ENCODE measurements at regions of chr6 and their contacts with region 1.

Region 1: DNA sequence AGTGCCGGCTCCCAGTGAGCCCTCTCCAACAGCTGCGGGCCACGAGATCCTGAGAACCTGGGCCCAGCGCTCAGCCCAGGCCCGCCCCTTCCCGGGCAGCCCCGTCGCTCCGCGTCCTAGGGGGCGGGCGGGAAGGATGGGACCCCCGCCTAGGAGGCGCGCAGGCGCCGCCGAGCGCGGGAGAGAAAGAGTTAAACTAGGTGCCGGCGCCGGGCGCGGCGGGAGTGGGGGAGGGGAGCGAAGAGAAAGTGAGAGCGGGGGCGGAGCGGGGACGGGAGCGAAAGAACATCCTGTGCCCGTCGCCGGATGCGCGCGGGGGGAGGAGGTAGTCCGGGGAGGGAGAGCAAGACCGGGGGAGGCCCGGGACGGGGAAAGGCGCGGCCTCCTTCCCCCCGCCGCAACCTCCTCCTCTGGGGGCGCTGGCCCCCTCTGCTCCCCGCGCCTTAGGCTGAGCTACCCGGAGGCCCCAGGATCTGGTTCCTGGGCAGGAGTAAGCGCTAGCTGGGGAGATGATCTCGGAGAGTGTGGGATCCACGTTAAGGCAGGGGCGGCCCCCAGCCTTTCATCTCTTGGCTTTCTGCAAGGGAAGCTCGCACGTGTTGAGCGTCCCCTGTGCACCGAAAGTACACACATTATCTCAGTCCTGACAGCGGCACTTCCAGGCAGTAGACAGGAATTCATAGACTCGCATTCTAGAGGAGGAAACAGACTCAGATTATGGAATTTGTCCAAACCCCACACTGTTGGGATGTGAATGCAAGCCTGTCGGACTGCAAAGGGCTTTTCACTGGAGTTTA is 4.9 kb upstream of the ARMC12 start:
- DNase-seq: peak; percentile 86
- H3K4me3 ChIP-seq: peak overlapping the region; percentile 90
- H3K27ac ChIP-seq: peak overlapping the region; percentile 81
- H3K4me1 ChIP-seq: peaks cover 29% of the 10 kb centered on the region
- H3K27me3 ChIP-seq: no peaks in the 10 kb centered on the region
- CTCF ChIP-seq: 0 out of 2 replicates have a peak, but pooled peaks have one; percentile 14

Region 2: DNA sequence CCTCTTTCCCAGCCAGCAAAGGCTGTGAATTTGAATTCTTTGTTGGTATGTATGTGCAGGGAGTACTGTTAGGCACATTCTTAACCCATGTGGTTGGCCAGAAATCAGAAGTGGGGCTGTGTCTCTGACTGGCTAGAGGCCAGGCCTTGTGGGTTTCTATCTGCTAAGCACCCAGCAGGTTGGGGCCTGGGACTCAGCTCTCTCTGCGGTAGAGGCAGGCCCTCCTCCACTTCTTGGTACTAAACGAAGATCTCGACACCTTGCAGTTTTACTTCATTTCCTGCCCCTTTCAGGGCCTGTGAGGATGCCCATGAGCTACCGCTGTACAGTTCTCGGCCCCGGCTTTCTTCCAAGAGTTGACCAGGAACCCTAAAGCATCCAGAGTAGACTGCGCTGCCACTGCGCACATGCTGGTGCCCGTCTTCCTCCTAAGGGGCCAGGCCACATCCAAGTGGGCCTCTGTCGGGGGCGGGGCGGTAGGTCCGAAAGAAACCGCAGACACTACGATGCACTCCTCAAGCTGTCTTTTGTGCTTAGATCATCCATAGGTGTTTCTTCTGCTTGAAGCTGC is 641.9 kb before region 1 on chr6:
- CTCF ChIA-PET with region 1: no interaction called
- POLR2A ChIA-PET with region 1: no interaction called
- intact Hi-C with region 1: no loop called
- DNase-seq: no peak
- H3K4me3 ChIP-seq: no peak overlapping the region
- H3K27ac ChIP-seq: no peak overlapping the region
- H3K4me1 ChIP-seq: no peaks in the 10 kb centered on the region
- H3K27me3 ChIP-seq: no peaks in the 10 kb centered on the region
- CTCF ChIP-seq: no peak

Region 3: GRCh38 chr6:35688581-35689322 is 43.2 kb before region 1 on chr6 and contains the start of gene FKBP5:
- CTCF ChIA-PET with region 1: interaction called, 7 read pairs
- POLR2A ChIA-PET with region 1: no interaction called
- intact Hi-C with region 1: loop called (anchors 2 kb)
- DNase-seq: peak; percentile 93
- H3K4me3 ChIP-seq: peak within 1 kb of the TSS; percentile 67
- H3K27ac ChIP-seq: no peak within 1 kb of the TSS
- H3K4me1 ChIP-seq: peaks cover 9% of the 10 kb centered on the region
- H3K27me3 ChIP-seq: no peaks in the 10 kb centered on the region
- CTCF ChIP-seq: no peak
- total RNA-seq, gene FKBP5: 20.4 and 26.2 TPM in 2 replicates

Region 4: GRCh38 chr6:36094753-36095496 is 363.0 kb after region 1 on chr6:
- CTCF ChIA-PET with region 1: no interaction called
- POLR2A ChIA-PET with region 1: no interaction called
- intact Hi-C with region 1: loop called (anchors 10 kb)
- DNase-seq: peak; percentile 87
- H3K4me3 ChIP-seq: no peak overlapping the region
- H3K27ac ChIP-seq: no peak overlapping the region
- H3K4me1 ChIP-seq: peaks cover 10% of the 10 kb centered on the region
- H3K27me3 ChIP-seq: no peaks in the 10 kb centered on the region
- CTCF ChIP-seq: peak; percentile 97

Measured in A673 (cell line).